ENCODE measurements at regions of chr7 and their contacts with region 1.

Region 1: DNA sequence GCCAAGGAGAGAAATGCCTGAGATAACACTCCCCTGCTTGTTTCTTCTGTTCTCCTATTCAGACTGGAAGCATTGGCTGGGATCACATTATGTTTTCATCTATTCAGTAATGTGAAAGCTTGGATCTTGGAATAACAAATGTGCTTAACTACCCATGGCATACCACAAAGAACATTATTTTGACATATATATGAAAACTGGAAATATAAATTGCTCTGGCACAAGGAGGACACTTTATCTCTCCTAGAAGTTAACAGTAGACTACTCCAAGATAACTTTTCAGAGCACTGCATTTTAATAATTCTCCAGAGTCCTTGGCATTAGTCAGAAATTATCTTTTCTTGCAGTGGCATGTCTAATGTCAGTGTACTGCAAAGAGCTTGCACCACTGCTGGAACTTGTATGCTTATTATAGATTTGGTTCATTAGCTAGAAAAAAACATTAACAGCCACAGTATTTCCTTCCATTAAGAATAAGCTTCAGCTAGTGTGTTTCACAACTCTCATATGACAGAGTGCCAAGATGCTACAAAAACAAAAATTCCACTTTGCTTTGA is 169.3 kb upstream of the LRRN3 start:
- DNase-seq: no peak
- ATAC-seq: no peak
- H3K4me3 ChIP-seq: no peak overlapping the region
- H3K4me3 Mint-ChIP-seq: no peak overlapping the region
- H3K27ac ChIP-seq: no peak overlapping the region
- H3K27ac Mint-ChIP-seq: no peak overlapping the region
- H3K4me1 ChIP-seq: no peaks in the 10 kb centered on the region
- H3K4me1 Mint-ChIP-seq: no peaks in the 10 kb centered on the region
- H3K27me3 ChIP-seq: no peaks in the 10 kb centered on the region
- H3K27me3 Mint-ChIP-seq: no peaks in the 10 kb centered on the region
- CTCF ChIP-seq: no peak

Region 2: DNA sequence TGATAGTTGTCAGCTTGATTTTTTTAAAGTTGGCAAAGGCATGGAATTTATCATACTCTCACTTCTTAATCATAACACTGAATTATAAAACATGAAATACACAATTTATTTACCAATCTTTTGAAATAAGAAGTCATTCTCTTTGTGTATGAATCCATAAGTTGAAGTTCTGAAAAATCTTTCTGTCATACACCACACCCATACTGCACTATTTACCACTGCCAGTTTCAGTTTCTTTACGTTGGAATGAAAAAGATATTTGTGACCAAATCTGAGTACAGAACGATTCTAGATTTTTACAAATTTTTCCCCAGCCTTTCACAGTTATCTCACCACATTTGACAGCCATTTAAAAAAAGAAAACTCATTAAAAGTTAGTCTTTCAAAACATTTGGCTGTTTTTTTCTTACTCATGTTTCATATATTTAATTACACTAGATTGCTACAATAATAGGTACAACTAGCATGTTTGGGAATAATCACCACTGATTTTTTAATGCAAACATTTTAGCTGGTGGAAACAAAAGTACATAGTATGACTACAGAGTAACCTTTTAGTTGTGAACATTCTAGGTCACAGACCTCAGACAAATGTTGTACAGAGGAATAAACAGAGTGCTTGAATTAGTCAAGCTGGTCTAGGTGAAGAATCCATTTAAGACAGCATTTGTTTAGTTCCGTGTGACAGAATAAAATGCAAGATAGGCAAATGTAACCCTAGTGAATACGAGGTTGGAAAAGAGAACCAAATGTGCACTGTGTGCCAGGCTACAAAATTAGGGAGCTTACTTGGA is 15.7 kb before region 1 on chr7:
- CTCF ChIA-PET with region 1: no interaction called
- POLR2A ChIA-PET with region 1: interaction called, 4 read pairs
- intact Hi-C with region 1: loop called in 1 of 2 experiments (anchors 2 kb)
- DNase-seq: peak in 1 of 9 experiments; percentile 4
- ATAC-seq: no peak
- H3K4me3 ChIP-seq: no peak overlapping the region
- H3K4me3 Mint-ChIP-seq: peak overlapping the region; percentile 63
- H3K27ac ChIP-seq: no peak overlapping the region
- H3K27ac Mint-ChIP-seq: no peak overlapping the region
- H3K4me1 ChIP-seq: peaks cover 3% of the 10 kb centered on the region
- H3K4me1 Mint-ChIP-seq: peaks cover 10% of the 10 kb centered on the region
- H3K27me3 ChIP-seq: no peaks in the 10 kb centered on the region
- H3K27me3 Mint-ChIP-seq: no peaks in the 10 kb centered on the region
- CTCF ChIP-seq: no peak

Measured in CD8-positive, alpha-beta T cell (primary cell).